ENCODE measurements at regions of chr18 and their contacts with region 1.

Region 1: GRCh38 chr18:3665780-3666525 is 216.0 kb downstream of the TGIF1 start:
- DNase-seq: peak; percentile 62 to 70 (median 68)
- H3K4me3 ChIP-seq: no peak overlapping the region
- H3K4me3 Mint-ChIP-seq: peak overlapping the region in 5 of 8 donors; percentile 22 to 64 (median 38)
- H3K27ac ChIP-seq: no peak overlapping the region
- H3K27ac Mint-ChIP-seq: peak overlapping the region in 1 of 7 donors; percentile 35
- H3K4me1 ChIP-seq: peaks cover 5% of the 10 kb centered on the region
- H3K4me1 Mint-ChIP-seq: peaks cover 2 to 9% (median 5%) of the 10 kb centered on the region in 4 donors
- H3K27me3 ChIP-seq: no peaks in the 10 kb centered on the region
- H3K27me3 Mint-ChIP-seq: peaks cover 2 to 3% of the 10 kb centered on the region in 2 donors

Region 2: DNA sequence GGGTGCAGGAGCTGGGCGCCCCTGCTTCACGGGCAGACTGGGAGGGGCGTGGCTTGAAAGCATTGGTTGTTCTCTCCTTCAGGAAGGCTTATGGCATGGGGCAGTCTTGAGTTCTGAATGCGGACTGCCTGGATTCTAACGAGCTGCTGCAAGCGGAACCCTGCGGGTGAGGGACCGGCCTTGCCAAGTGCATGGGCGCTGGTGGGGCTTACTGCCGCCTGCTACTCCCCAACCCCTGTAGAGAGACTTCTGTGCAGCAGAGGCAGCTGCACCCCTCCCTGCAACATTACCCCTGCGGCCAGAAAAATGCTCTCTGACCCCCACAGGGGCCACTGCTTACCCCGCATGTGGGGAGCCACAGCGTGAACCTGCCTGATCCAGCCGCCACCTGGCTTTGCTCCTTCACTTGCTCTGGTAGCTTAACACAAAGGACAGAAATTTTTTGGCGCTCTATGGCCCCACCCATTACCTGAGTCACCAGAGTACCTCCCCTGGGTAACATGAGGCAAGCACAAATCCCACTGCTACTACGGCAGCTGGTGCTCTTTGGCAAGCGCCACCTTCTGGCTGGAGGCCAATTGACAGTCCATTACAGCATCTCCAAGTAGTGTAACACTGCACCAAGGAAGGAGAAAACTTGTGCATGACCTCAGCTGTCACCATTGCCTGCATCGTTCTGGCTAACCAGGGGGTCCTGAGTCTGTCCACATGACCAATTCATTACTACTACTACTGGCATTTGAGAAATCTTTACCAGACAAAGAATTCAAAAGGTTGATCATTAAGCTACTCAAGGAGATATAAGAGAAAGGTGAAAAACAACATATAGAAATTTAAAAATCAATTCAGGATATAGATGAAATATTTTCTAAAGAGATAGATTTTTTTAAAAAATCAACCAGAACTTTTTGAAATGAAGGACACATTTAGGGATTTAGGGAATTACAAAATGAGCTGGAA is 368.6 kb before region 1 on chr18:
- CTCF ChIA-PET with region 1: interaction called, 69 read pairs
- POLR2A ChIA-PET with region 1: no interaction called
- intact Hi-C with region 1: no loop called
- DNase-seq: peak; percentile 88 to 95 (median 90)
- H3K4me3 ChIP-seq: peak overlapping the region; percentile 71 to 86
- H3K4me3 Mint-ChIP-seq: peak overlapping the region; percentile 91 to 98 (median 94)
- H3K27ac ChIP-seq: peak overlapping the region; percentile 44
- H3K27ac Mint-ChIP-seq: peak overlapping the region; percentile 51 to 96 (median 90)
- H3K4me1 ChIP-seq: peaks cover 9% of the 10 kb centered on the region
- H3K4me1 Mint-ChIP-seq: peaks cover 2 to 15% (median 10%) of the 10 kb centered on the region in 4 donors
- H3K27me3 ChIP-seq: no peaks in the 10 kb centered on the region
- H3K27me3 Mint-ChIP-seq: peaks cover 8 to 13% of the 10 kb centered on the region in 2 donors

Region 3: DNA sequence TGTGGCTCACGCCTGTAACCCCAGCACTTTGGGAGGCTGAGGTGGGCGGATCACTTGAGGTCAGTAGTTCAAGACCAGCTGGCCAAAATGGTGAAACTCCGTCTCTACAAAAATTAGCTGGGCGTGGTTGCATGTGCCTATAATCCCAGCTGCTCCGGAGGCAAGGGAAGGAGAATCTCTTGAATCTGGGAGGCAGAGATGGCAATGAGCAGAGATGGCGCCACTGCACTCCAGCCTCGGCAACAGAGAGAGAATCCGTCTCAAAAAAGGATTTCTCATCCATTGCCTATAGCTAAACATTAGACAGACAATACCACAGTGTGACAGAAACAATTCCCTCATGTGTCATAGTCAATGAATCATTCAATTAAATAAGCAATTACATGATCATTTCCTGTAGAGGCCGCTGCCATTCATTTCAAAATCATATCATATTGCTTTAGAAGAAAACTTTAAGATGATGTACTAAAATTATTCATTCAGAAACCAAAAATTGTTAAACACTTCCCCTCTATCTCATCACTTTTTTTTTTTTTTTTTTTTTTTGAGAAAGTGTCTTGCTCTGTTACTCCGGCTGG is 285.5 kb before region 1 on chr18:
- CTCF ChIA-PET with region 1: interaction called, 38 read pairs
- POLR2A ChIA-PET with region 1: no interaction called
- intact Hi-C with region 1: loop called (anchors 1 kb)
- DNase-seq: peak in 4 of 5 donors; percentile 22 to 44 (median 34)
- H3K4me3 ChIP-seq: no peak overlapping the region
- H3K4me3 Mint-ChIP-seq: no peak overlapping the region
- H3K27ac ChIP-seq: no peak overlapping the region
- H3K27ac Mint-ChIP-seq: no peak overlapping the region
- H3K4me1 ChIP-seq: no peaks in the 10 kb centered on the region
- H3K4me1 Mint-ChIP-seq: peaks cover 0 to 2% (median 0%) of the 10 kb centered on the region in 4 donors
- H3K27me3 ChIP-seq: no peaks in the 10 kb centered on the region
- H3K27me3 Mint-ChIP-seq: peaks cover 0 to 5% of the 10 kb centered on the region in 2 donors

Region 4: GRCh38 chr18:3391704-3392466 is 274.1 kb before region 1 on chr18:
- CTCF ChIA-PET with region 1: no interaction called
- POLR2A ChIA-PET with region 1: no interaction called
- intact Hi-C with region 1: no loop called
- DNase-seq: no peak
- H3K4me3 ChIP-seq: no peak overlapping the region
- H3K4me3 Mint-ChIP-seq: no peak overlapping the region
- H3K27ac ChIP-seq: no peak overlapping the region
- H3K27ac Mint-ChIP-seq: no peak overlapping the region
- H3K4me1 ChIP-seq: no peaks in the 10 kb centered on the region
- H3K4me1 Mint-ChIP-seq: no peaks in the 10 kb centered on the region
- H3K27me3 ChIP-seq: no peaks in the 10 kb centered on the region
- H3K27me3 Mint-ChIP-seq: peaks cover 1 to 2% of the 10 kb centered on the region in 2 donors

Region 5: DNA sequence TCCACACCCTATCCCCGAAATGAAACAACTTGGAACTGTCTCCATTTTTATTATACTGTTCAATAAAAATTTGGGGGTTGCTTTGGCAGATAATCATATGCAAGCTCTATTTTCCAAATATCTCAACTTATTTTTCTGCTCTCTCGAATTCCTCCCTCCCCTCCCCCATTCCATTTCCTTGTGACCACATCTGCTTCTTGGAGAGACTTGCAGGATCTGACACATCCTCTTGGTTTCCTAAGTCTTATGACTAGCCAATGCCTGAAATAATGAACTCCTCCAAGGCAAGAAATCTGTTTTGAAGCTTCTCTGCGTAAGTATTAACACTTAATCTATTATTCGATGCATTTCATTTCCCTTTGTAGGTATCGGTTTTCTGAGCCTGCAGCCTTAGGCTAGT is 199.9 kb before region 1 on chr18:
- CTCF ChIA-PET with region 1: interaction called, 46 read pairs
- POLR2A ChIA-PET with region 1: no interaction called
- intact Hi-C with region 1: no loop called
- DNase-seq: no peak
- H3K4me3 ChIP-seq: no peak overlapping the region
- H3K4me3 Mint-ChIP-seq: peak overlapping the region in 1 of 8 donors; percentile 69
- H3K27ac ChIP-seq: no peak overlapping the region
- H3K27ac Mint-ChIP-seq: peak overlapping the region in 3 of 7 donors; percentile 24 to 68 (median 41)
- H3K4me1 ChIP-seq: peaks cover 17% of the 10 kb centered on the region
- H3K4me1 Mint-ChIP-seq: peaks cover 12 to 22% (median 17%) of the 10 kb centered on the region in 4 donors
- H3K27me3 ChIP-seq: no peaks in the 10 kb centered on the region
- H3K27me3 Mint-ChIP-seq: no peaks in the 10 kb centered on the region

Region 6: GRCh38 chr18:3585656-3586509 is 80.1 kb before region 1 on chr18:
- CTCF ChIA-PET with region 1: interaction called, 74 read pairs
- POLR2A ChIA-PET with region 1: interaction called, 7 read pairs
- intact Hi-C with region 1: loop called (anchors 1 kb)
- DNase-seq: peak; percentile 55 to 69 (median 60)
- H3K4me3 ChIP-seq: no peak overlapping the region
- H3K4me3 Mint-ChIP-seq: peak overlapping the region in 4 of 8 donors; percentile 14 to 39 (median 30)
- H3K27ac ChIP-seq: no peak overlapping the region
- H3K27ac Mint-ChIP-seq: peak overlapping the region in 6 of 7 donors; percentile 64 to 86 (median 76)
- H3K4me1 ChIP-seq: peaks cover 13% of the 10 kb centered on the region
- H3K4me1 Mint-ChIP-seq: peaks cover 7 to 19% (median 12%) of the 10 kb centered on the region in 4 donors
- H3K27me3 ChIP-seq: no peaks in the 10 kb centered on the region
- H3K27me3 Mint-ChIP-seq: no peaks in the 10 kb centered on the region

Region 7: DNA sequence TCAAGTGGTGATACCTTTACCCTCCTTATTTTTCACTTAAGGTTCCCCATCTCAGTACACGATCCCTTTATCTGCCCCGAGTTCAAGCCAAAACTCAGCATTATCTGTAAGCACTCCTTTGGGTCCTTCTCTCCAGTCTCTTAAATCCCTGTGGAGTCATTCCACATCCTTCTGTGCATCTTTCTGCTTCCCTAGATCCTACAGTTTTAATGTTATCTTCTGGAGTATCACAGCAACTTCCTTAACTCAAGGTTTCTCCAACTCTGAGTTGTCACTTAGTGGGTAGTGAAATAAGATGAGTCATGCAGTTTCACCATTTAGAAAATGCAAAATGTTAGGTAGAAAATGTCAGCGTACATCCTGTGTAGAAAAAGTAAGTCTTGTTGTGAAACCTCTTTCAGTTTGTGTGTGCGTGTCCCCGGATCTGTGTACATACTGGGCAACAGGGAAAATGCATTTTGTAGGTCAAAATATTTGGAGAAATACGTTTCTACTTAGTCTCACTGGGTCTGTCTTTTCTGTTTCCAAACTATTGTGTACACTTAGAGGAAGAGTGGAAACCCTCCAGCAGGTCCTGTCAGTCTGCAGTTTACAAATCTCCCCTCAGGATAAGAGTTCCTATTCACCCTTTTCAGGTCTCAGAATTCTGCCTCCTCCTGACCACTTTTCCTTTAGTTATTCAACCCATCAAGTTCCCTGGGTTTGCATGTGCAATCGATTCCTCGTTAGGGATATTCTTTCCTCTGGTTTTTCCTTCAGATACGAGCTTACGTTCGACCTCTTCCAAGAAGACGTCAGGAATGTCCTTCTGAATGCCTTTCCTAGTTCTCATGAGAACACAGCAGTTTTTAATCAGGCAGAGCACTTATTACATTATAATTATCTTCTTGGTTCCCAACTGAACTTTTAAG is 61.2 kb before region 1 on chr18:
- CTCF ChIA-PET with region 1: interaction called, 28 read pairs
- POLR2A ChIA-PET with region 1: interaction called, 3 read pairs
- intact Hi-C with region 1: loop called (anchors 2 kb)
- DNase-seq: peak; percentile 43 to 63 (median 56)
- H3K4me3 ChIP-seq: peak overlapping the region; percentile 44 to 54
- H3K4me3 Mint-ChIP-seq: no peak overlapping the region
- H3K27ac ChIP-seq: peak overlapping the region; percentile 67
- H3K27ac Mint-ChIP-seq: no peak overlapping the region
- H3K4me1 ChIP-seq: peaks cover 58% of the 10 kb centered on the region
- H3K4me1 Mint-ChIP-seq: peaks cover 8 to 15% (median 11%) of the 10 kb centered on the region in 4 donors
- H3K27me3 ChIP-seq: no peaks in the 10 kb centered on the region
- H3K27me3 Mint-ChIP-seq: no peaks in the 10 kb centered on the region

Region 8: GRCh38 chr18:3726238-3726951 is 60.4 kb after region 1 on chr18:
- CTCF ChIA-PET with region 1: no interaction called
- POLR2A ChIA-PET with region 1: no interaction called
- intact Hi-C with region 1: no loop called
- DNase-seq: no peak
- H3K4me3 ChIP-seq: no peak overlapping the region
- H3K4me3 Mint-ChIP-seq: no peak overlapping the region
- H3K27ac ChIP-seq: no peak overlapping the region
- H3K27ac Mint-ChIP-seq: no peak overlapping the region
- H3K4me1 ChIP-seq: no peaks in the 10 kb centered on the region
- H3K4me1 Mint-ChIP-seq: no peaks in the 10 kb centered on the region
- H3K27me3 ChIP-seq: no peaks in the 10 kb centered on the region
- H3K27me3 Mint-ChIP-seq: peaks cover 17 to 34% of the 10 kb centered on the region in 2 donors

Region 9: GRCh38 chr18:4869101-4869500 is 1203.1 kb after region 1 on chr18:
- CTCF ChIA-PET with region 1: no interaction called
- POLR2A ChIA-PET with region 1: no interaction called
- intact Hi-C with region 1: no loop called
- DNase-seq: no peak
- H3K4me3 ChIP-seq: no peak overlapping the region
- H3K4me3 Mint-ChIP-seq: no peak overlapping the region
- H3K27ac ChIP-seq: no peak overlapping the region
- H3K27ac Mint-ChIP-seq: no peak overlapping the region
- H3K4me1 ChIP-seq: no peaks in the 10 kb centered on the region
- H3K4me1 Mint-ChIP-seq: no peaks in the 10 kb centered on the region
- H3K27me3 ChIP-seq: no peaks in the 10 kb centered on the region
- H3K27me3 Mint-ChIP-seq: no peaks in the 10 kb centered on the region